Motor neuron (in vitro differentiated cells): ENCODE measurements at regions of chr6 and their contacts with region 1.

Region 1: GRCh38 chr6:85323435-85324040 is 126.3 kb upstream of the NT5E start:
- ATAC-seq: peak; percentile 47 to 92 (median 78)
- H3K4me3 ChIP-seq: no peak overlapping the region
- H3K27ac ChIP-seq: no peak overlapping the region
- H3K4me1 ChIP-seq: no peaks in the 10 kb centered on the region

Region 2: DNA sequence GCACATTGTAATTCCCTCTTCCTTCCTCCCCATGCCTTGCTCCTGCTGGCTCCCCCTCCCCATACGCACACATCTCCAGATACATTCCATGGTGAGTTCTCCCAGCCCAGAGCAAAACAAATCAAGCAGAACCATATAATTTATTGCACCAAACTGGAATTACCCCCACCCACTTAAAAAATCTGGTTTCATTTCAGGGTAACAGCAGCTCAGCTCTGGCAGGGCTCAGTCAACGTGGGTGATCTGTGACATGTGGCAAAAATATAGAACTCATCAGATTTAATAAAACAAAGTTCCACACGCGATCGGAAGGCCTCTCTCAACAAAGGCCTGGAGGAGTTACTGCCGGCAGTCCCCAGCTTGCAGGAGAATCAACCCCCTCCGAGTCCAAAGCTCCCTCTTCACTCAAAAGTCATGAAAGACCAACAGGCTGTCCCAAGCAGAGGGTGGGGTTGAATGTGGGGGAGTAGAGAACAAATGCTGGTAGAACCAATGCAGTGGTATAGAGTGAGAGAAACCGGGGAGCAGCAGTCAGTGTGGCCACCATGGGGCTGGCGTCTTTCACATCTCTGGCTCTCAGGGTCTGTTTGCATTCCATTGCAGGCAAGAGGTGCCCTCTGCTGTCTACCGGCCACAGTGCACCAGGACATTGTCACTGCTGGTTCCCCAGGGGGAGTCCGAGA is 196.9 kb before region 1 on chr6:
- in situ Hi-C with region 1: loop called in 2 of 9 experiments (anchors 25 kb)
- ATAC-seq: peak; percentile 62 to 98 (median 88)
- H3K4me3 ChIP-seq: no peak overlapping the region
- H3K27ac ChIP-seq: no peak overlapping the region
- H3K4me1 ChIP-seq: peaks cover 15 to 19% of the 10 kb centered on the region in 2 donors

Region 3: DNA sequence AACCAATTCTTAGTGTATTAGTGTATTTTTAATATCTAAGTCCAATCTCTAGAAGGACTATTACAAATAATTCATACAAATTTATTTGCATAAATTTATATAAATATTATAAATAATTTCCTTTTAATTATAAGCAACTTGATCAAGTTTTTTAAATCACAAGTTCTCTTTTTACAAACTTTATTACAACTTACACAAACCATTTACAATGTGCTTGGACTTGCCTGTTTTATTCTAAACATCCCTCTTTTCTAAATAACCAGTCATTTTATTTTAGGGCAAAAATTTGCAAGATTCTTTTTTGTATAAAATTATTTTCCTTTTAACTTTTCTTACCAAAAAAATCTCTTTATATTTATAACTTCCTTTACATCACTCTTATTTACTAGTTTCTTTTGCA is 402.7 kb after region 1 on chr6:
- in situ Hi-C with region 1: no loop called
- ATAC-seq: no peak
- H3K4me3 ChIP-seq: no peak overlapping the region
- H3K27ac ChIP-seq: no peak overlapping the region
- H3K4me1 ChIP-seq: no peaks in the 10 kb centered on the region